A673 (cell line): ENCODE measurements at regions of chr20 and their contacts with region 1.

Region 1: GRCh38 chr20:8231038-8231437 is 99.0 kb downstream of the PLCB1 start:
- DNase-seq: no peak
- H3K4me3 ChIP-seq: no peak overlapping the region
- H3K27ac ChIP-seq: no peak overlapping the region
- H3K4me1 ChIP-seq: no peaks in the 10 kb centered on the region
- H3K27me3 ChIP-seq: no peaks in the 10 kb centered on the region
- CTCF ChIP-seq: no peak

Region 2: DNA sequence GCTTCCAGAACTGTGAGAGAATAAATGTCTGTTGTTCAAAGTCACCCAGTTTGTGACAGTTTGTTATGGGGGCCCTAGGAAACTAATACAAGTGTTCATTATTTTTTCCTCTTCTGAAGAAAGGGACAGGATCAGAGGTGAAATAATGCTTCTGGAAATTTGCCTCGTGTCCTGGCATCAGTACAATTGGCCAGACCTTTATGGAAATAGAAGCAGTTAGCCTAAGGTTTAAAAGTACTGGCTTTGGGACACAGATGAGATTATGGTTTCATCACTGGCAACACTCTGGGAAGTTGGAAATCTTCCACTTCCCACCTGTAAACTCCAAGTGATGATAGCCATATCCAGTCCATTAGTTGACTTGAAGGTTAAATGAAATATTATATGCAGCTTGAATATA is 10.3 kb before region 1 on chr20:
- CTCF ChIA-PET with region 1: no interaction called
- POLR2A ChIA-PET with region 1: no interaction called
- intact Hi-C with region 1: loop called (anchors 1 kb)
- DNase-seq: no peak
- H3K4me3 ChIP-seq: no peak overlapping the region
- H3K27ac ChIP-seq: no peak overlapping the region
- H3K4me1 ChIP-seq: no peaks in the 10 kb centered on the region
- H3K27me3 ChIP-seq: no peaks in the 10 kb centered on the region
- CTCF ChIP-seq: no peak